ENCODE measurements at regions of chr16 and their contacts with region 1.

Region 1: DNA sequence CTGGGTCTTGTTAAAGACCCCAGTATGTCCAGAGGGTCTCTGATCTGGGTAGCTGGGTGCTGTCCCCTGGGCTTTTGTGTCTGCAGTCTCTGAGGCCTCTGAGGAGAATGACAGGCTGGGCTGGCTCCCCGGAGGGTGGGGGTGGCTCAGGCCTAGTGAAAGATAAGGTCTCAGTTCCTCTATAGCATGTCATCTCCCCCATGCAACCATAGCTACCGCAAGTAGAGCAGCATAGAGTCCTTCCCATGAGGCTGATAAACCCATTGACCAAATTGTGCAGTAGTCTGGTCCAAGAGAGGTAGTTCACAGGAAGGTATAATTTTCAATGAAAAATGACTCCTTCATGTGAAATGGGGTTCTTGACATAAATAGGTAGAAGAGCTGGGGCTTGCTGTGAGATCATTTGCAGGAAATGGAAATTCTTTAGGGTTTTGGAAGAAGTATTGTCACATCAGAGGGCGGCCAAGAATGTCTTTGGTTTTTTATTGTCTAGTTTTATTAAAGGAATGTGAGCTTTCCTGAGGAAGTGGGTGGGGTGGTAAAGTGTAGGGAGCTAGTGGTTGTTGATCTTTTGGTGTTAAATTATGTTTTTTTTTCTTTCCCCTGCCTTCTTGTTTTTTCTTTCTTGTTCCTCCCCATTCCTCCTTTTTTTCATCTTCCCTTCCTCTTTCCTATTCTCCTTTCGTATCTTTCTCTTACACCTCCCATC is 21.0 kb downstream of the SLC7A6OS start:
- DNase-seq: peak; percentile 67
- ATAC-seq: peak; percentile 89
- H3K4me3 Mint-ChIP-seq: peak overlapping the region; percentile 62
- H3K27ac Mint-ChIP-seq: peak overlapping the region; percentile 90
- H3K4me1 Mint-ChIP-seq: peaks cover 70% of the 10 kb centered on the region
- H3K27me3 Mint-ChIP-seq: no peaks in the 10 kb centered on the region
- CTCF ChIP-seq: no peak

Region 2: DNA sequence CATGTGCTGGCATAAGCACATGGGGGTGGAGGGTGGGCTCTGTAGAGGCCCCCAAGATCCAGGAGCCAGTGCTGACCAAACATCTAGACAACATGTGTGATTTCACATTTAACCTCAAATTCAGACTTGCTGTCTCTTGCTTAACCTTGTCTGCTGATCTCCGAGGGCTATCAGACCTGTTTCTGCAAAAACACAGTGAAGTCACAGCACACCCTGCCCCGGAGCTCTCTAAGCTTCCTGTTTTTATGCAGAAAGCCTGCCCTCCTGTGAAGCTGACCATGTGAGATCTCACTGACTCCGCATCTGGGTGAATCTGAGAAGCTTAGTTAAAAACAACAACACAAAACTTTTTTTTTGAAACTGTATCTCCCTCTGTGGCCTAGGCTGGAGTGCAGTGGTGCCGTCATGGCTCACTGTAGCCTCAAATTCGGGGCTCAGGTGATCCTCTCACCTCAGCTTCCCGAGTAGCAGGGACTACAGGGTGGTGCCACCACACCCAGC is 283.9 kb before region 1 on chr16:
- CTCF ChIA-PET with region 1: no interaction called
- POLR2A ChIA-PET with region 1: no interaction called
- intact Hi-C with region 1: no loop called
- DNase-seq: no peak
- ATAC-seq: peak; percentile 98
- H3K4me3 Mint-ChIP-seq: peak overlapping the region; percentile 58
- H3K27ac Mint-ChIP-seq: peak overlapping the region; percentile 95
- H3K4me1 Mint-ChIP-seq: peaks cover 40% of the 10 kb centered on the region
- H3K27me3 Mint-ChIP-seq: no peaks in the 10 kb centered on the region
- CTCF ChIP-seq: no peak

Region 3: GRCh38 chr16:68179196-68179795 is 110.5 kb before region 1 on chr16:
- CTCF ChIA-PET with region 1: no interaction called
- POLR2A ChIA-PET with region 1: no interaction called
- intact Hi-C with region 1: no loop called
- DNase-seq: no peak
- ATAC-seq: no peak
- H3K4me3 Mint-ChIP-seq: no peak overlapping the region
- H3K27ac Mint-ChIP-seq: no peak overlapping the region
- H3K4me1 Mint-ChIP-seq: no peaks in the 10 kb centered on the region
- H3K27me3 Mint-ChIP-seq: no peaks in the 10 kb centered on the region
- CTCF ChIP-seq: no peak

Region 4: GRCh38 chr16:68237243-68238028 is 52.3 kb before region 1 on chr16:
- CTCF ChIA-PET with region 1: no interaction called
- POLR2A ChIA-PET with region 1: no interaction called
- intact Hi-C with region 1: loop called (anchors 1 kb)
- DNase-seq: peak; percentile 84
- ATAC-seq: peak; percentile 83
- H3K4me3 Mint-ChIP-seq: peak overlapping the region; percentile 93
- H3K27ac Mint-ChIP-seq: peak overlapping the region; percentile 79
- H3K4me1 Mint-ChIP-seq: peaks cover 33% of the 10 kb centered on the region
- H3K27me3 Mint-ChIP-seq: no peaks in the 10 kb centered on the region
- CTCF ChIP-seq: no peak

Region 5: GRCh38 chr16:68275611-68276191 is 14.1 kb before region 1 on chr16:
- CTCF ChIA-PET with region 1: interaction called, 7 read pairs
- POLR2A ChIA-PET with region 1: interaction called, 13 read pairs
- intact Hi-C with region 1: loop called (anchors 1 kb)
- DNase-seq: no peak
- ATAC-seq: peak; percentile 86
- H3K4me3 Mint-ChIP-seq: peak overlapping the region; percentile 56
- H3K27ac Mint-ChIP-seq: peak overlapping the region; percentile 88
- H3K4me1 Mint-ChIP-seq: peaks cover 51% of the 10 kb centered on the region
- H3K27me3 Mint-ChIP-seq: no peaks in the 10 kb centered on the region
- CTCF ChIP-seq: no peak

Region 6: DNA sequence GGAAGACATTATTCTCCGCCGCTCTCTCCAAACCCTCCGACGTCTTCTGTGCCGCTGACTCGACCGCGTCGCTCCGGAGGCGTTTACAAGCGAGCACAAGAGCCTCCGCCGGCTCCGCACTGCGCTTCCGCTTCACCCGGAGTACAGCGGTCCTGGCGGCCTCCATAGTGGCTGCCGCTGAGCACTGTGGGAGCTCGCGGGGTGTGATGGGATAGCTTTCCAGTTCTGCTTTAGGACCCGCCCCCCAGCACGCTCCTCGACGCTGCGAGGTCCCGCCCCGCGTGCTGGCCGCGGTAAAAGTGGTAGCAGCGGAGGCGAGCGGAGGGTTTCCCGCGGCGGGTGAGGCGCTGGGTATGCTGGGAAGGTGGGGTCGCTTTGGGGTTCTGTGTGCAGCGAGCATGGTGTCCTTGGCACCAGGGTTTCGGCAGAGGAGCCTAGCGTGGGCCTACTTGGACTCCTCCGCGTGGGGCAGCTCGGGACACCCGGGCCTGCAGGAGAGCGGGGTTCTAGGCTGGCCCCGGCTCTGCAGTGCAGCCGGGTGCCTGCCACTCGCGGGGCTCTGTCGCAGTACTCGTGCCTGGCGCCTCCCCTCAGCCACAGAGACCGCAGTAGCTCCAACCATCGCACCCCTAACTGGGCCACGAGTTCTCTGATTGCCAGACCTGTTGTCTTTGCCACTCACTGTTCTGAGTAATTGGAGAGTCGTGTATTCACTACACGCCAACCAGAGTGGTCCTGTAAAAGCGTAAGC is 21.2 kb after region 1 on chr16 and contains the starts of genes PRMT7 and SLC7A6OS:
- CTCF ChIA-PET with region 1: interaction called, 9 read pairs
- POLR2A ChIA-PET with region 1: interaction called, 37 read pairs
- intact Hi-C with region 1: loop called (anchors 1 kb)
- DNase-seq: peak; percentile 87
- ATAC-seq: peak; percentile 99
- H3K4me3 Mint-ChIP-seq: peak within 1 kb of the TSS; percentile 98
- H3K27ac Mint-ChIP-seq: peak within 1 kb of the TSS; percentile 93
- H3K4me1 Mint-ChIP-seq: peaks cover 38% of the 10 kb centered on the region
- H3K27me3 Mint-ChIP-seq: no peaks in the 10 kb centered on the region
- CTCF ChIP-seq: no peak
- total RNA-seq, gene PRMT7: 41.8 and 50.3 TPM in 2 replicates
- total RNA-seq, gene SLC7A6OS: 34.8 and 42.0 TPM in 2 replicates

Region 7: DNA sequence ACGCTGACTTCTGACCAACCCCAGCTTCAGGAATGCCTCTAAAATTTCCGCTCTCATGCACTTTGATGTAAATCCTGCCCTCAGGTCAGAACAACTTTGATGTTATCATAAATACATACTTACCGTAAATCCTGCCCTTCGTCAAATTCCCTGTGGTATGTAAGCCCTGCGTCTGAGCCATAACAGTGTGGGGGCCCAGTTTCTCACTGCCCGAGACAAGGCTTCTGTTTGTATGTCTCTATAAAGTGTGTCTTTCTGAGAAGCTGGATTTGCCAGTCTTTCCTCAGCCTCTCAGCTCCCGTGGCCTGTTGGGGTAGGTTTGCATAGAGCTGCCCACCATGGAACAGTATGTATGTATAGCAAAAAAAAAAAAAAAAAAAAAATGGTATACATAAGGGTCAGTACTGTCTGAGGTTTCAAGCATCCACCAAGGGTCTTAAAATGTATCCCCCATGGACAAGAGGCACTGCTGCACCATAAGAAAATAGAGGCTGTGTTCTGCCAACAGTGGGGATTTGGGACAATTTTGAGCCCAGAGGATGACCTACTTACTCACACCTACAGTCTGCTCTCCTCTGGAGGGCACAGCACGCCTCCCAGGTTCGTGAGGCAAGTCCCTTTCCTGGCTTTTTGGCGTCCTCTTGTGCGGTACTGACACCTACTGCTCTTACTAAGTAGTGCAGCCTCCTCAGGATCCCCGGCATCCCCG is 38.5 kb after region 1 on chr16:
- CTCF ChIA-PET with region 1: interaction called, 13 read pairs
- POLR2A ChIA-PET with region 1: no interaction called
- intact Hi-C with region 1: no loop called
- DNase-seq: peak; percentile 61
- ATAC-seq: peak; percentile 100
- H3K4me3 Mint-ChIP-seq: no peak overlapping the region
- H3K27ac Mint-ChIP-seq: no peak overlapping the region
- H3K4me1 Mint-ChIP-seq: peaks cover 14% of the 10 kb centered on the region
- H3K27me3 Mint-ChIP-seq: no peaks in the 10 kb centered on the region
- CTCF ChIP-seq: peak; percentile 99